Esophagus muscularis mucosa (tissue), 4 donors: ENCODE measurements at regions of chr11 and their contacts with region 1.

Region 1: GRCh38 chr11:96054870-96055705 is 131.2 kb upstream of the MTMR2 start:
- DNase-seq: no peak
- H3K4me3 ChIP-seq: no peak overlapping the region
- H3K27ac ChIP-seq: peak overlapping the region; percentile 31 to 65 (median 42)
- H3K4me1 ChIP-seq: peaks cover 4 to 64% (median 49%) of the 10 kb centered on the region in 4 donors
- H3K27me3 ChIP-seq: no peaks in the 10 kb centered on the region
- CTCF ChIP-seq: peak; percentile 60 to 70 (median 66)
- EP300 ChIP-seq: no peak
- POLR2A ChIP-seq: no peak

Region 2: GRCh38 chr11:96037405-96037936 is 17.6 kb before region 1 on chr11:
- intact Hi-C with region 1: no loop called
- DNase-seq: no peak
- H3K4me3 ChIP-seq: no peak overlapping the region
- H3K27ac ChIP-seq: no peak overlapping the region
- H3K4me1 ChIP-seq: peaks cover 0 to 15% (median 8%) of the 10 kb centered on the region in 4 donors
- H3K27me3 ChIP-seq: no peaks in the 10 kb centered on the region
- CTCF ChIP-seq: no peak
- EP300 ChIP-seq: no peak
- POLR2A ChIP-seq: no peak

Region 3: DNA sequence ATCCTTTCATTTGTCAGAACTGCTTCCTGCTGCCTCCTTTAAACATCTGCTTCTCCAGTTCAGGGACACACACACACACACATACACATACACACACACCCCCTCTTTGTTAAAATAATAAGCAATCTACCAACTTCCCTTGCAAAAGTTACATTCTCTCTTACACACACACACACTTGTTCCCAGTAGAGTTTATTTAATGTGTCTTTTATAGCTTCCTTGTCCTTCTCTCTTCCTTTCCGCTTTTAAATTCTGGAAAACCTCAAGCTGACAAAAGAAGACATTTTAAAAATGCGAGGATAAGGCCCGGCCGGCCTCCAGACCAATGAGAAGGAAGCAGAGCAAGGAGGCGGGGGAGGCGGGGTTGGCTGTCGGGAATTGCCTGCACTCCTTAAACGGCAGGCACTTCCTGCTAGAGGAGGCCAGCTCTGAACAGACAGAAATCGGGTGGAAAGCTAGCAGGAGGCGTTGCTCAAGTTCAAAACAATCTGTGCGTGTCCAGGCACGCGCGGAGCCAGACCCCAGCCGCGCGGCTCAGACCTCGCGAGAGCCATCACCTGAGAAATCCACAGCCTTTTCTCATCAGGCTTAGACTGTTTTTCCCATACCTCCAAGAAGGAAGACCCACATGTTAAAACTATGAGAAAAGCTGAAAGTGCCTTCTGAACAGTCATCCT is 188.0 kb after region 1 on chr11:
- intact Hi-C with region 1: loop called (anchors 10 kb)
- DNase-seq: peak; percentile 99
- H3K4me3 ChIP-seq: peak overlapping the region; percentile 46 to 56 (median 52)
- H3K27ac ChIP-seq: peak overlapping the region; percentile 84 to 89 (median 88)
- H3K4me1 ChIP-seq: peaks cover 7 to 58% (median 52%) of the 10 kb centered on the region in 4 donors
- H3K27me3 ChIP-seq: no peaks in the 10 kb centered on the region
- CTCF ChIP-seq: no peak
- EP300 ChIP-seq: no peak
- POLR2A ChIP-seq: no peak